ENCODE measurements at regions of chr6 and their contacts with region 1.

Region 1: GRCh38 chr6:41901882-41902519 is 6.8 kb upstream of the USP49 start:
- DNase-seq: no peak
- H3K4me3 ChIP-seq: no peak overlapping the region
- H3K27ac ChIP-seq: no peak overlapping the region
- H3K4me1 ChIP-seq: peaks cover 4% of the 10 kb centered on the region; the same call in 1 of the 2 replicates
- H3K27me3 ChIP-seq: no peaks in the 10 kb centered on the region
- CTCF ChIP-seq: peak; percentile 21; the same call in 1 of the 2 replicates

Region 2: DNA sequence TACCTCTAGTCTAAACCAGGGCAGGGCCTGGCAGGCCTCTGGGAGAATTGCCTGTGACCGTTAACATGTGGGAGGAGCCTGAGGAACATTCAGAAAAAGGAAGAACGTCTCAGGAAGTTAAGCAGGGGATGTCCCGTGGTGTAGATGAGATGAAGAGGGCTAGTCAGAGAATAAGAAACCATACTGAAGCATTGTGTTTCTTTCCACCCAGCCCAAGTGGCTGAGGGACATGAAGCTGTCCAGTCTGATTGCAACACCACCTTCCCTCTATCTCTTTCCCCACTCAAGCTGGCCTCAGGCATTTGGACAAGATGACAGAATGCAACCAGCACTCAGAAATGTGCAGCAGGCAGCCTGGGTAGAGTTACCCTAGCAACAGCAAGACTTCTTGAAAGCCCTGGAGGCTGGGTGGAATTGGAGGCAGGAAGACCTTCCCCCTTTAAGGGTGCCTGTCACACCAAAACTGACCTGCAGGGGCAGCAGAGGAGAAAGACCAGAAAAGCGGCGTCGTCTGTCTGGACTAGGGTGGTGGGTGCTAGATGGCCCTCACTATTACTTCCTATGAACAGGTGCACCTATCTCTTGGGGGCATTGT is 1049.1 kb before region 1 on chr6:
- CTCF ChIA-PET with region 1: interaction called, 11 read pairs
- POLR2A ChIA-PET with region 1: no interaction called
- intact Hi-C with region 1: no loop called
- DNase-seq: no peak
- H3K4me3 ChIP-seq: no peak overlapping the region
- H3K27ac ChIP-seq: no peak overlapping the region
- H3K4me1 ChIP-seq: no peaks in the 10 kb centered on the region
- H3K27me3 ChIP-seq: peaks cover 25% of the 10 kb centered on the region
- CTCF ChIP-seq: peak; percentile 67

Measured in PC-9 (cell line).